H1 (cell line): ENCODE measurements at regions of chr19 and their contacts with region 1.

Region 1: DNA sequence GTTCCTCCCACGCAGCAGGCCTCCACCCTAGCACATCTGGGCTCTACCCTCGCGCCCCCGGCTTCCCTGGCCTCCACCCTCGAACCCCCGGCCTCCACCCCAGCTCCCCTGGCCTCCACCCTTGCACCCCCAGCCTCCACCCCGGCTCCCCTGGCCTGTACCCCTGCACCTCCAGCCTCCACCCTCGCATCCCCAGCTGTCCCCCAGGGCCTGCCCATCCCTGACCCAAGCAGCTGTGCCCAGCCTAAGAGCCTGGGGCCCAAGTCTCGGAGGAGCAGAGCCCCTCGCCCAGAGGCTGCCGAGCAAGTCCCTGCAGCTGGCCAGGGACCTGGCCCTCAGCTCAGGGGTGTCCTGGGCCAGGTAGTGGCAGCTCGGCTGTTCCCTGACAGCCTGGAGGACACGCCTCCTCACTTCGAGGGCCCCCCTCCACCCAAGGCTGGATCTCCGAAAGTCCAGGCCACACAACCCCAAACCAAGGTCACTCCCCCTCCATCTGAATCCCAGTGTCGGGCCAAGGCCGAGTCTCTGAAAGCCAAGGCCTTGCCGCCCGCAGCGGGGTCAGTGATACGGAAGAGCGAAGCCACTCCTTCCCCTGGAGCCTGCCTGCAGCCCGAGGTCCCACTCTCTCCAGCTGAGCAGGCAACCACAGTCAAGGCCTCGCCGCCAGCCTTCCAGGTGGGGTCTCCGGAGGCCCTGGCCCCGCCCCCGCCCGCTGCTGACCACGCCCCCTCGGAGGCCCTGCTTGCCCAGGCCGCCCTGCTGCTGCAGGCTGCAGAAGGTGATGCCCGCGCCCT is 7.9 kb upstream of the ARHGAP33 start:
- DNase-seq: peak in 1 of 2 experiments; percentile 89
- H3K4me3 ChIP-seq: peak overlapping the region in 1 of 4 experiments; percentile 42; a peak in 3 of 8 replicates
- H3K27ac ChIP-seq: no peak overlapping the region
- H3K4me1 ChIP-seq: peaks cover 0 to 13% (median 7%) of the 10 kb centered on the region in 4 experiments; a peak in 5 of 7 replicates
- H3K27me3 ChIP-seq: no peaks in the 10 kb centered on the region
- CTCF ChIP-seq: no peak
- EP300 ChIP-seq: no peak
- POLR2A ChIP-seq: no peak
- RAD21 ChIP-seq: no peak; a peak in 1 of 4 replicates

Region 2: GRCh38 chr19:35748106-35749020 is 19.1 kb before region 1 on chr19 and contains the start of gene LIN37:
- CTCF ChIA-PET with region 1: interaction called, 6 read pairs
- POLR2A ChIA-PET with region 1: interaction called, 10 read pairs
- DNase-seq: peak; percentile 97 to 99
- H3K4me3 ChIP-seq: peak within 1 kb of the TSS; percentile 58 to 93 (median 90)
- H3K27ac ChIP-seq: no peak within 1 kb of the TSS
- H3K4me1 ChIP-seq: peaks cover 0 to 4% (median 2%) of the 10 kb centered on the region in 4 experiments; a peak in 3 of 7 replicates
- H3K27me3 ChIP-seq: no peaks in the 10 kb centered on the region
- CTCF ChIP-seq: no peak
- EP300 ChIP-seq: no peak
- POLR2A ChIP-seq: no peak
- RAD21 ChIP-seq: no peak
- total RNA-seq, gene LIN37: 2.9 and 3.8 TPM in 2 replicates

Region 3: GRCh38 chr19:35963514-35963913 is 196.0 kb after region 1 on chr19:
- CTCF ChIA-PET with region 1: no interaction called
- POLR2A ChIA-PET with region 1: no interaction called
- DNase-seq: peak in 1 of 2 experiments; percentile 88
- H3K4me3 ChIP-seq: no peak overlapping the region
- H3K27ac ChIP-seq: no peak overlapping the region
- H3K4me1 ChIP-seq: peaks cover 0 to 7% (median 3%) of the 10 kb centered on the region in 4 experiments; a peak in 4 of 7 replicates
- H3K27me3 ChIP-seq: peaks cover 13 to 27% (median 23%) of the 10 kb centered on the region in 4 experiments
- CTCF ChIP-seq: no peak
- EP300 ChIP-seq: no peak
- POLR2A ChIP-seq: no peak
- RAD21 ChIP-seq: no peak; a peak in 1 of 4 replicates